HepG2 (cell line): ENCODE measurements at regions of chr2 and their contacts with region 1.

Region 1: GRCh38 chr2:163345908-163346573 is 389.8 kb downstream of the FIGN start:
- DNase-seq: peak; percentile 59
- ATAC-seq: peak; percentile 66
- H3K4me3 ChIP-seq: no peak overlapping the region
- H3K27ac ChIP-seq: no peak overlapping the region
- H3K4me1 ChIP-seq: no peaks in the 10 kb centered on the region
- H3K27me3 ChIP-seq: no peaks in the 10 kb centered on the region
- CTCF ChIP-seq: peak; percentile 72
- EP300 ChIP-seq: no peak
- POLR2A ChIP-seq: no peak
- RAD21 ChIP-seq: peak; percentile 42; the same call in 1 of the 2 replicates

Region 2: DNA sequence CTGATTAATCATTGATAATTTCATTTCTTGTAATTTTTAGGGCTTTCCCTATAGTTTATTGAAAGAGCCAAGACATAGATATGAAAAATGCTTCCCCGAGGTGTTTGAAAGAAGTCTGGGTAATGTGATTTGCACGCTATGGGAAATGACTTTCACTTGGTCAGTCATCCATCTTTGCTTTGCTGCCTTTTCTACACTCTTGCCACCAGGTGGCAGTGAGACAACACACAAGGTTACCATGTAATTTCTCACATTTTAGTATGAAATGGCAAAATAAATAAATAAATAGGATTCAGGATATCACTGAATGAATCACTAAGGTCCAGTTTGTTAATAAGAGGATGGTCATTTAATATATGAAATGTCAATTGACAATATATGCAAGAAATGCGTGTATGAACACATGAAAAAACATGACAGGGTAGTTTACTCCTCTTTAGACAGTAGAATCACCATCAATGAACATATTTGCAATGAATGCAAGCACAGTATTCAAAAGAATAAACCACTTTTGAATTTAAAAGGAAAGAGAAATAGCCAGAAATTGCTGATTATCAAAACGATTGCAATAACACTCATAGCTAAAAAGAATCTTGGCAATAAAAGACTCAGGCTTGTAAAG is 455.2 kb before region 1 on chr2:
- CTCF ChIA-PET with region 1: no interaction called
- POLR2A ChIA-PET with region 1: no interaction called
- in situ Hi-C with region 1: no loop called
- intact Hi-C with region 1: no loop called
- DNase-seq: peak; percentile 62
- ATAC-seq: peak; percentile 86
- H3K4me3 ChIP-seq: no peak overlapping the region
- H3K27ac ChIP-seq: no peak overlapping the region
- H3K4me1 ChIP-seq: no peaks in the 10 kb centered on the region
- H3K27me3 ChIP-seq: no peaks in the 10 kb centered on the region; a peak in 1 of 5 replicates
- CTCF ChIP-seq: peak; percentile 86
- EP300 ChIP-seq: no peak
- POLR2A ChIP-seq: no peak
- RAD21 ChIP-seq: peak; percentile 51

Region 3: GRCh38 chr2:163191372-163191771 is 154.7 kb before region 1 on chr2:
- CTCF ChIA-PET with region 1: no interaction called
- POLR2A ChIA-PET with region 1: no interaction called
- in situ Hi-C with region 1: no loop called
- intact Hi-C with region 1: loop called (anchors 10 kb)
- DNase-seq: peak; percentile 24
- ATAC-seq: peak; percentile 43; the same call in 1 of the 3 replicates
- H3K4me3 ChIP-seq: no peak overlapping the region
- H3K27ac ChIP-seq: no peak overlapping the region
- H3K4me1 ChIP-seq: no peaks in the 10 kb centered on the region
- H3K27me3 ChIP-seq: no peaks in the 10 kb centered on the region
- CTCF ChIP-seq: peak; percentile 65
- EP300 ChIP-seq: no peak
- POLR2A ChIP-seq: no peak
- RAD21 ChIP-seq: peak; percentile 27; the same call in 1 of the 2 replicates

Region 4: DNA sequence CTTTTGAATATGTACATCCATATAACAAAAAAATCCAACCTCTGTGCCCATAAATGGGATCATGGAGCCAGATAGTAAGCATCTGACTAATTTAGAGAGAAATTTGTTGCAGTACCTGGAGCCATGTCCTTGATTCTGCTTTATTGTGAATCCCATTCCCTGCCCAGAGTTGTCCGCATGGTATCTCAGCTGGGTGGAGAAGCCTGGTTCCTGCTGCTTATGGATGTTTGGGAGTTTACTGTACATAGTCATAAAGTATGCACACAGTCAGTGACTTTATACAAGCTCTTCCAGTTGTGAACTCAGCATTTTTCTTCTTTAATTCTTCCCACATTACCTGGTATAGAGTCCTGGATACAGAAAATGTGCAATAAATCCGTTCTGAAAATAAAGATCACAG is 43.8 kb after region 1 on chr2:
- CTCF ChIA-PET with region 1: no interaction called
- POLR2A ChIA-PET with region 1: no interaction called
- in situ Hi-C with region 1: no loop called
- intact Hi-C with region 1: no loop called
- DNase-seq: no peak
- ATAC-seq: no peak
- H3K4me3 ChIP-seq: no peak overlapping the region
- H3K27ac ChIP-seq: no peak overlapping the region
- H3K4me1 ChIP-seq: no peaks in the 10 kb centered on the region
- H3K27me3 ChIP-seq: no peaks in the 10 kb centered on the region
- CTCF ChIP-seq: no peak
- EP300 ChIP-seq: no peak
- POLR2A ChIP-seq: no peak
- RAD21 ChIP-seq: no peak

Region 5: GRCh38 chr2:163610817-163611556 is 264.9 kb after region 1 on chr2:
- CTCF ChIA-PET with region 1: interaction called, 3 read pairs
- POLR2A ChIA-PET with region 1: no interaction called
- in situ Hi-C with region 1: no loop called
- intact Hi-C with region 1: loop called (anchors 1 kb)
- DNase-seq: peak; percentile 10
- ATAC-seq: peak; percentile 95
- H3K4me3 ChIP-seq: no peak overlapping the region
- H3K27ac ChIP-seq: no peak overlapping the region
- H3K4me1 ChIP-seq: no peaks in the 10 kb centered on the region
- H3K27me3 ChIP-seq: no peaks in the 10 kb centered on the region
- CTCF ChIP-seq: peak; percentile 64
- EP300 ChIP-seq: no peak
- POLR2A ChIP-seq: no peak
- RAD21 ChIP-seq: peak; percentile 41; the same call in 1 of the 2 replicates

Region 6: DNA sequence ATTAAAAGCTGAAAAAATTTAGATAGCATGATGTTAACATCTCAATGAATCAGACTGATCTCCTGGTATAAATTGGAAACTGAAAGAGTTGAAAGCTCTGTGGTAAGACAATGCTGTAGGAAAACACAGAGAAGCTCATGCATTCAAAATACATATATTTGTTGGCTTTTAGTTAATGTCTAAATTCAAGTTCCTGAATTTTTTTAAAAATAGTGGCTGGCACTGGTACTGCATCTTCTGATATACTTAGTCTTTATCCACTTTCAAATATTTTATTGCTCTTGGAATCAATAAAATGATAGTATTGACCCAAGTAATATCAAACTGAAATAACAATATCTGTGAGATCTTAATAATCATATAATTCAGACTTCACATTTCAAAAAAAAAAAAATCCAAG is 541.1 kb after region 1 on chr2:
- CTCF ChIA-PET with region 1: no interaction called
- POLR2A ChIA-PET with region 1: no interaction called
- in situ Hi-C with region 1: loop called (anchors 10 kb)
- intact Hi-C with region 1: no loop called
- DNase-seq: no peak
- ATAC-seq: no peak
- H3K4me3 ChIP-seq: no peak overlapping the region
- H3K27ac ChIP-seq: no peak overlapping the region
- H3K4me1 ChIP-seq: no peaks in the 10 kb centered on the region
- H3K27me3 ChIP-seq: no peaks in the 10 kb centered on the region
- CTCF ChIP-seq: no peak
- EP300 ChIP-seq: no peak
- POLR2A ChIP-seq: no peak
- RAD21 ChIP-seq: no peak

Region 7: GRCh38 chr2:164430166-164430783 is 1084.2 kb after region 1 on chr2:
- CTCF ChIA-PET with region 1: no interaction called
- POLR2A ChIA-PET with region 1: no interaction called
- in situ Hi-C with region 1: no loop called
- intact Hi-C with region 1: loop called (anchors 1 kb)
- DNase-seq: peak; percentile 39
- ATAC-seq: peak; percentile 91
- H3K4me3 ChIP-seq: no peak overlapping the region
- H3K27ac ChIP-seq: no peak overlapping the region
- H3K4me1 ChIP-seq: no peaks in the 10 kb centered on the region
- H3K27me3 ChIP-seq: 0 out of 5 replicates have a peak, but pooled peaks cover 0 to 4% of the 10 kb centered on the region in 2 experiments
- CTCF ChIP-seq: peak; percentile 69
- EP300 ChIP-seq: no peak
- POLR2A ChIP-seq: no peak
- RAD21 ChIP-seq: no peak